GM10248 (cell line): ENCODE measurements at regions of chr9 and their contacts with region 1.

Region 1: DNA sequence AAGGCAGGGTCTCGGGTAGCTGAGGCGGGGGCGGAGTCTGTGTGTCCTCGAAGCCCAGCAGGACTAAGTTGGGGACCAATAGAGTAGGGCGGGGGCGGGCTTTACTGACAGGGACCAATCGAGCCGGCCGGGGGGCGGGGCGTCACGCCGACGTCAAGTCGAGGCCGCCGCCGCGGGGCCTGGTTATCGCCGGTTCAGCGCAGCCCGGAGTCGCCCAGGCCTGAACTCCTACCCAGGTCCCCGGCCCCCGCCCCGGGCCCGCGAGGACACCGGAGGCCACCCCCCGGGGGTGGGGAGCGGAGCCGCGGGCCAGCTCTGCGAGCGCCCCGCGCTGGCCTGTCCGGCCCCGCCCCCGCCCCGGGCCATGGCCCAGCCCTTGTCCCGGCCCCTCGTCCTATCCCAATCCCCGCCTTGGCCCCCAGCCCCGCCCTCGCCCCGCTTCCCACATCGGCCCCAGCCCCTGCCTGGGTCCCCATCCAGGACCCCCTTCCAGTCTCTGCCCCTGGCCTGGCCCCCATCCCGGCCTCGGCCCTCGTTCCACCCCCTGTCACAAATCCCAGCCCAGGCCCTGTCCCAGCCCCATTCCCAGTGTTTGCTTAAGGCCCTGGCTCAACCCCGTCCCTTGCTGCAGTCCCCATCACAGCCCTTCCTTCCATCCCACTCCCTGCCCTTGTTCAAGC is at the start of gene TMEM8B:
- DNase-seq: peak; percentile 96
- CTCF ChIP-seq: no peak

Region 2: DNA sequence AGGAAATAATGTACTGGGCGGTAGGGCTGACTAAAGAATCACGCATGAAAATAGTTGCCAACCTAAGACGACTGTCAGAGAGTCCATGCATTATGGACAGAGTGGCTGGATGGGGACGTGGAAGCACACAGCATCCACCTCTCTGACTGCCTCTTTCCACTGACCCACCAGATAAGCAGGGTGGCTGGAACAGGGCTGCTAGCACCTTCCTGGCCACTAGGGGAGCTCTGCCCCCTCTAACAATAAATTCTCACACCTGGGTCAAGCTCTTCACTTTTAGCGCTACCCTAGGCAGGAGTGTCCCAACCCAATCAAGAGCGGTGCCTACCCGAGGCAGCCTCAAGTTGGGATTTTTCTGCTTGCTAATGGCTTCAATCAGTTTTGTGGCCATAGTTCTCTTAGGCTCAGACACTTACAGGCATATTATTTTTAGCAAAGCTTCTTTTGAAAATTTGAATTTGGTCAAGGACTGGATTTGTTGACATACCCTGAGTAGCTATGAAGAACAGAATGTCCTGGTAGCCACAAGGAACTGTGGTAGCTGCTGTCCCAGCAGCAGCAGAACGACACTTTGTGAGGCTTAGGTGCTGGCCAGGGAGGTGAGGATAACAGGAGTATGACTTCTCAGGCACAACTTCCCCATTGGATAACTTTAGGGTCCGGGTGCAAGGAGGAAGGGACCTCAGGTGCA is 132.6 kb before region 1 on chr9:
- CTCF ChIA-PET with region 1: interaction called, 18 read pairs
- POLR2A ChIA-PET with region 1: no interaction called
- DNase-seq: peak; percentile 85
- CTCF ChIP-seq: peak; percentile 94

Region 3: GRCh38 chr9:35790385-35791296 is 38.6 kb before region 1 on chr9:
- CTCF ChIA-PET with region 1: interaction called, 24 read pairs
- POLR2A ChIA-PET with region 1: no interaction called
- DNase-seq: peak; percentile 85
- CTCF ChIP-seq: peak; percentile 67

Region 4: GRCh38 chr9:35814841-35815543 is 14.2 kb before region 1 on chr9 and contains the start of gene HINT2:
- CTCF ChIA-PET with region 1: interaction called, 58 read pairs
- POLR2A ChIA-PET with region 1: no interaction called
- DNase-seq: peak; percentile 95
- CTCF ChIP-seq: no peak

Region 5: GRCh38 chr9:35852876-35853865 is 23.9 kb after region 1 on chr9:
- CTCF ChIA-PET with region 1: interaction called, 26 read pairs
- POLR2A ChIA-PET with region 1: no interaction called
- DNase-seq: no peak
- CTCF ChIP-seq: no peak

Region 6: GRCh38 chr9:35871497-35871896 is 42.3 kb after region 1 on chr9:
- CTCF ChIA-PET with region 1: interaction called, 42 read pairs
- POLR2A ChIA-PET with region 1: no interaction called
- DNase-seq: no peak
- CTCF ChIP-seq: no peak